ENCODE measurements at regions of chr19 and their contacts with region 1.

Region 1: DNA sequence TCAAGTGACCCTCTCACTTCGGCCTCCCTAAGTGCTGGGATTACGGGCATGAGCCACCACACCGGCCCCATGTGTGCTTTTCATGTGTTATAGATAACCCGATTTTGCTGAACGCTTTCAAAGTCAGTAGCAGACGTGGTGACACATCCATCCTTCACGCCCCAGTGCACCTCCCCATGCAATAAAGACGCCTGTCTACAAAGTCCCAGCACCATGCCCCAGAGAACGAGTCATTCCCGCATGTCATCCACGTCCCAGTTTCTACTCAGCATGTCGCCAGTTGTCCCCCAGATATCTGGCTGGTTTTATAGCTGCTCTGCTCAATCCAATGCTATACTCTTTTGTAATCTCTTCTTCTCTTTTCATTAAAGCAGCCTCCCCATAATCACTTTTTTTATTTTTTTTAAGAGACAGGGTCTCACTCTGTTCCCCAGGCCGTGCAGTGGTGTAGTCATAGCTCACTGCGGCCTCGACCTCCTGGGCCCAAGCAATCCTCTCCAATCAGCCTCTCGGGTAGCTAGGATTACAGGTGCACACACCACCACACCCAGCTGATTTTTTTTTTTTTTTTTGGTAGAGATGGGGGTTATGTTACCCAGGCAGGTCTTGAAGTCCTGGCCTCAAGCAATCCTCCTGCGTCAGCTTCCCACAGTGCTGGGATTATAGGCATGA is 42.5 kb downstream of the DNM2 start:
- DNase-seq: peak; percentile 57
- ATAC-seq: peak; percentile 69
- H3K4me3 Mint-ChIP-seq: peak overlapping the region; percentile 77
- H3K27ac Mint-ChIP-seq: peak overlapping the region; percentile 94
- H3K4me1 Mint-ChIP-seq: peaks cover 87% of the 10 kb centered on the region
- H3K27me3 Mint-ChIP-seq: no peaks in the 10 kb centered on the region
- CTCF ChIP-seq: no peak

Region 2: GRCh38 chr19:10662384-10663251 is 97.8 kb before region 1 on chr19:
- CTCF ChIA-PET with region 1: no interaction called
- POLR2A ChIA-PET with region 1: no interaction called
- intact Hi-C with region 1: no loop called
- DNase-seq: no peak
- ATAC-seq: peak; percentile 43
- H3K4me3 Mint-ChIP-seq: peak overlapping the region; percentile 67
- H3K27ac Mint-ChIP-seq: peak overlapping the region; percentile 43
- H3K4me1 Mint-ChIP-seq: peaks cover 58% of the 10 kb centered on the region
- H3K27me3 Mint-ChIP-seq: no peaks in the 10 kb centered on the region
- CTCF ChIP-seq: no peak

Region 3: DNA sequence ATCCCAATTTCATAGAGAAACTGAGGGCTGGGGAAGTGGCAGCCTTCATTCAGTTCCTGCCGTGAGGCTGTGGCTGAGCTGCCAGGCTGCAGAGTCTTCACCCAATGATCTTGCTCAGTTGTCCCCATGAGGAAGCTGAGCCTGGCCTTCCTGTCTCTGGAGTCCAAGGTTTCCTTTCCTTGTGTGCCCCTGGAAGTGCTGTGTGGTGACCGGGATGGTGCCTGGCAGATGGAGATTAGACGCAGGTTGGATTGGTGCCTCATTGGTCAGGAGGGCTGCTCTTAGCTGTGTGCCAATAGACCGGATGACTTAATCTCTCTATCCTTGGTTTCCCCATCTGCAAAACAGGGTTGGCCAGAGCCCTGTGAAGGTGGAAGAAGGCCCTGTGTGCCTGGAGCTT is 17.9 kb before region 1 on chr19:
- CTCF ChIA-PET with region 1: no interaction called
- POLR2A ChIA-PET with region 1: interaction called, 8 read pairs
- intact Hi-C with region 1: loop called (anchors 1 kb)
- DNase-seq: no peak
- ATAC-seq: no peak
- H3K4me3 Mint-ChIP-seq: no peak overlapping the region
- H3K27ac Mint-ChIP-seq: no peak overlapping the region
- H3K4me1 Mint-ChIP-seq: peaks cover 76% of the 10 kb centered on the region
- H3K27me3 Mint-ChIP-seq: no peaks in the 10 kb centered on the region
- CTCF ChIP-seq: no peak

Region 4: DNA sequence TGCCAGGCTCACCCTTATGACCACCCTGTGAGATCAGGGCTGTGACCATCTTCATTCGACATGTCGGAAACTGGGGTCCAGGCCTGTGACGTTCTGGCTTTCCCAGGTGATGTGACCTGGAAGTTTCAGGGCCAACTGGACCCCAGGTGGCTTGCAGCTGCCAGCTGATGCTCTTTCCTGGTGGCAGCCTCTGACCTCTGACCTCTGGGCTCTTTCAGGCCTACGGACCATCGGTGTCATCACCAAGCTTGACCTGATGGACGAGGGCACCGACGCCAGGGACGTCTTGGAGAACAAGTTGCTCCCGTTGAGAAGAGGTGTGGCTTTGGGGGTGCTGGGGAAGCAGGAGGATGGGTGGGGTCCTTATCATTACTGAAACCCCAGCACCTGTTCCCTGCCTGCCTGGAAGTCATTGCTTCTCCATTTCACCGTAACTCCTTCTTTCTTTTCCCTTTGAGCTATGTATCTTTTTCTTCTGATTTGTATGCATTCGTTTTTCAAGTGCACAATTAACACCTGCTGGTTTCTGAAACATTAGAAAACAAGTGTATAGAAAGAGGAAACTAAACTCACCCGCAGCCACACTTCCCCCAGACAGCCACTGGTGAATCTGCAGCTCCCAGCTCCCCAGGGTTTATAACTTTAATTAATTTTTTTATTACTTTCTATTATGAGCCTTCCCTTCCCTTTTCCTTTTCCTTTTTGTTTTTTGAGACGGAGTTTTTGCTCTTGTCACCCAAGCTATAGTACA is 16.7 kb after region 1 on chr19:
- CTCF ChIA-PET with region 1: no interaction called
- POLR2A ChIA-PET with region 1: interaction called, 5 read pairs
- intact Hi-C with region 1: loop called (anchors 2 kb)
- DNase-seq: no peak
- ATAC-seq: peak; percentile 82
- H3K4me3 Mint-ChIP-seq: peak overlapping the region; percentile 2
- H3K27ac Mint-ChIP-seq: peak overlapping the region; percentile 64
- H3K4me1 Mint-ChIP-seq: peaks cover 46% of the 10 kb centered on the region
- H3K27me3 Mint-ChIP-seq: no peaks in the 10 kb centered on the region
- CTCF ChIP-seq: no peak

Measured in activated B cell treated with CpG ODN at 0.5 μM for 24 hours (primary cell).